HEK293T (cell line): ENCODE measurements at regions of chr5 and their contacts with region 1.

Region 1: DNA sequence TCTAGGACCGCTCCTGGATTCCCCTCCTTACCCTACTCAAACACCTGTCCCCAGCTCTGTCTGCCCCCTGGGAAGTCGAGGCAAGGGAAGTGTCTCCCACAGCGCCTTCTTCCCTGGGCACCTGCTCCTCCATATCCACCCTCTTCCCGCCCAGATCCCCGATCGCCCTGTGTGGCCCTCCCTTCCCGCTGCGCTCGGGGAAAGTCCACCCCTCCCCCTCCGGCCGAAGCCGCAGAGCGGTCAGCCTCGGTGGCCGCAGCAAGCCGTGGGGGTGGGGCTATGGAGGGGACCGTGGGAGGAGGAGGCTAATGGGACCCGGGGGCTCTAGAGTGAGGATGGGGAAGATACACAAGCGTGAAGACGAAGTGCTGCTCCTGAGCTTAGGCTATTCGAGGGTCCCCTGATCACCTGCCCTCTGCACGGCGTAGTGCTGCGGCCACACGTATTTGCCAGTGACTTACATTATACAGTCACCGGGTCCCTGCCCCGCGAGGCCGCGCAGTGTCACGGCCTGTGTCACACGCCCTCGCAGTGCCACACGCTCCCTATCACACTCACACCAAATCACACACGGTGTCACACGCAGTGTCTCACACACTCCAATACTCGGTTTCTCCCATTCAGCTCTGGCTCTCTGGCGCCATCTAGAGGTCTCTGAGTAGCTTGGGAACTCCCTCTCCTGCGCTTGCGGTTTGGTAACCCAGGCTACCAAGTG is 658 bp upstream of the PCDH1 start:
- DNase-seq: peak; percentile 75

Region 2: GRCh38 chr5:141691867-141692532 is 186.9 kb before region 1 on chr5:
- CTCF ChIA-PET with region 1: interaction called, 33 read pairs
- POLR2A ChIA-PET with region 1: no interaction called
- DNase-seq: peak; percentile 89

Region 3: DNA sequence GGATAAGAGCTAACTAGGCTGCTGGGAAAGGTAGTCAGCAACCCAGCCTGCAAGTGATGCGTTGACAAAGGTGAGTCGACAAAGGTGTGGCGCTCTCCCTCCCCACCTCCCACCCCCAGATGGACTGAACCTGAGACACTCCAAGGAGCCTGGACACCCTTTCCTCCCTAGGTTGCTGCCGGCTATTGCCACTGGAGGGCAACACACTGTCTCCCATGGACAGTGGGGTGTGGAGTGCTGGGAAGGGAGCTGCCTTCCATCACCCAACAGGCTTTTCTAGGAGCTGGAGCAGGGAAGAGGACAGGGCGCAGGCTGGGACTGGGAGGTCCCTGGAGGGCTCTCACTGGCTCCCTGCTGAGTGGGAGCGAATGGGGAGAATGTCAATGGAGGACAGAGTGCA is 121.5 kb before region 1 on chr5:
- CTCF ChIA-PET with region 1: interaction called, 14 read pairs
- POLR2A ChIA-PET with region 1: no interaction called
- DNase-seq: peak; percentile 50

Region 4: GRCh38 chr5:141849375-141850243 is 29.3 kb before region 1 on chr5:
- CTCF ChIA-PET with region 1: interaction called, 3 read pairs
- POLR2A ChIA-PET with region 1: interaction called, 21 read pairs
- DNase-seq: peak; percentile 80

Region 5: GRCh38 chr5:141889282-141889871 is 10.5 kb after region 1 on chr5:
- CTCF ChIA-PET with region 1: interaction called, 14 read pairs
- POLR2A ChIA-PET with region 1: no interaction called
- DNase-seq: no peak

Region 6: DNA sequence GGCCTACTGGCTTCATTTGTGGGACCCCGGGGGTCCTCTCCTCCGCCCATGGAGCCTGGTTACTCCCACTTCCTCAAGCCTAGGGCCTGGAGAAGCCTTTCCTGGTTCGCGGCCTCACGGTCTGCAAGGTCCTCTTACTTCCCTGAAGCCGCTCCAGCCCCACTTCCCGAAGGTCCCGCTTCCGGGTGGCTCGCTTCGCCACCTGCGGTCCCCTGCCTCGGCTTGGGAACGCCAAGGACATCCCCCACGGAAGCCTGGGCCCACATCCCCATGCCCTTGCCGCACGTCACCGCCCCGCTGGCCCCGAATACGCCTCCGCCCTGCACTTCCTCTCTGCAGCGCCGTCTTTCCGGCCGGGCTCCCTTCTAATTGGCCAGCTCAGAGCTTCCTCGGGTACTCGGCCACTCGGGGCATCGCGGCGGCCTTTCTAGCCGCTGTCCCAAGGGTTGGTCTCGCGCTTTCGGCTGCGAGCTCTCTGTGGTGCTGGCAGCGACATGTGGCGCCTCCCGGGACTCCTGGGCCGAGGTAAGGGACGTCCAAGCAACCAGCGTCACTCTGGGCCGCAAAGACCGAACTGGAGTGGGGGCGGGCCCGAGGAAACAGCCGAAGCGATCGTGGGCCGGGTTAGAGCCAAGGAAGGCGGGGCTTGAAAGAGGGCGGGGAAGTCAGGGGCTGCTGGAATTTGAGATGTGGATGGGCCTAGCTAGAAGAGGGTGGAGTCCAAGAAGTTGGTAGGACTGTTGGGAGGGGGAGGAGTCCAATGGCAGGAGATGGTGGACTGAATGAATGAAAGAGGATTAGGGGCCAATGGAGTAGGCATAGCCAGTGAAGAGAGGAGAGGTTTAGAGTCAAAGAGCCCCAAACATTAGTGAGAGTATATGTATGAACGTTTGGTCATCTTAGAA is 44.8 kb after region 1 on chr5 and contains the start of gene DELE1:
- CTCF ChIA-PET with region 1: interaction called, 5 read pairs
- POLR2A ChIA-PET with region 1: interaction called, 47 read pairs
- DNase-seq: peak; percentile 91

Region 7: DNA sequence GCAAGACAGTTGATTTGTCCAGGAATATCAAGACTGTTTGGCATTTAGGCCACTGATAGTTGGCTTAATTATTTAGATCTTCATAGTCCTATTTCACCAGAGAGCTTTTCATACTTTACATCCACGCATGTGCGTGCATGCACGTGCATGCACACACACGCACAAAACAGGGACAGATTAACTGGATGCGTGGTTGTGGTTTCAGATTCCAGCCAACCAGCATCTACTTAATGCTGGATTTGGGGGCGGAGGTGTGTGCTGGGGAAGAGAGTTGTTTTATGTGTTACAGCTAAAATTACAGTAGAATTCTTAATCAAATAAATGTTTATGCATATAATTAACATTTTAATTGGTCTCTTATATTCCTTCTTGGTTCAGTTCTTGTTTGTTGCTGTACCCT is 97.3 kb after region 1 on chr5:
- CTCF ChIA-PET with region 1: no interaction called
- POLR2A ChIA-PET with region 1: no interaction called
- DNase-seq: no peak